AG04449 (cell line): ENCODE measurements at regions of chr5 and their contacts with region 1.

Region 1: GRCh38 chr5:72307968-72308852 is 11.8 kb downstream of the MRPS27 start:
- DNase-seq: peak; percentile 81
- H3K4me3 ChIP-seq: peak overlapping the region; percentile 80
- CTCF ChIP-seq: peak; percentile 94

Region 2: DNA sequence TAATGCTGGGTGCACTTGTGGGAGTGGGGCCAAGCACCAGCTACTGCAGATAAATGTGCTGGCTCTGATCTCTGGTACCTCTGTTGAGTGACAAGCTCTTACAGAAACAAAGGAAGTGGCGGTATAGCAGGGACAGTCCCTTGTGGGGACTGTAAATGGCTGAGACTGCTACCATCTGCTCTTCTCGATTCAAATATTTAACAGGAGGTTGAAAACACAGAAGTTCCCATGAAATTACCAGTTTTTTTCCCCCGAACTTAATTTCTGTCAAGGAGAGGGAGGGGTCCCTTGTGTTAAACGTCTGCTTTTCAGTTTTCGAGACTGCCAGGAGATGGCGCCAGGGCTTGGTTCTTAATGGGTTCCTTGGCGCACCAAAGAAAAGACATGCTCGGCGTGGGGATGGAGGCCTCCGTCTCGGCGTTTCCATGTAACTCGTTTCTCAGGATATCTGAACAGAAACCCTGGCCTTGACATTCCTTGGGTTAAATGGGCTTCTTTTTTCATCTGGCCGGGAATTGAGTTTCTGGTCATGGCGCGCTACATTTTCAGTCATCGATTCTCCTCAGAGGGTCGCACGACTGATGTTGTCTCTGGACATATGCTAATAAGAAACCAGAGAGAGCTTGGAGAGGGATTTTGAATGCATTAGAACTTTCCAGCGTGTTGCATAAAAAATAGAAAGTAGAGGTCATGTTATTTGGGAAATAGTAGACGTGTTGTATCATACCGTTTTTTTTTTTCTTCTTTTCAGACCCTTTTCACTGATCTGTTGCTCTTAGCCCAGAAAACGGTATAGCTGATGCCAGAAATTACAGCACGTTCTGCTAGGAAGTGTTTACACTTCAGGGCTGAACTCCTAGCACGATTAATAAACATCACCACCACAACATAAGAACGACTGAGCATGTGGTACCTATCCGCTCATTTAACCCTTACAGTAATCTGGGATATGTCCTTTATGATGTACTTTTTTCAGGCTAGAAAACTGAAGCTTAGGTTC is 525.1 kb before region 1 on chr5:
- CTCF ChIA-PET with region 1: interaction called, 25 read pairs
- POLR2A ChIA-PET with region 1: no interaction called
- DNase-seq: no peak
- H3K4me3 ChIP-seq: no peak overlapping the region
- CTCF ChIP-seq: peak; percentile 79

Region 3: DNA sequence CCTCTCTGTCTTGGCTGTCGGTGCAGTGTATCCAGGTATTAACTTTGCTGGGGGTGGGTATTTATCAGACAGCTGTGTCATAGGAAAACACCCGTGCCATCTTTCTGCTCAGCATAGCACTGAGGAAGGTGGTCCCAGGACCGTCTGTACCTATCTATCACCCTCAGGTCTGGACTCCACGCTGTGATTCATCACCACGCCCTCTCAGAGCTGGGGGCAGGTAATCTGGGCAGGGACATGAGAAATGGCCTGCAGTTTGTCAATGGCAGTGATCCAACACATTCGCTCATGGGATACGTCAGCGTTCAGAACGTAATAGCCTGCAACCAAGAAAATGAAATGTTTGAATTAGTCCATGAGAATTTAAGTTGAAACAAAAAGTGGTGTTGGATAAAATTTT is 352.5 kb before region 1 on chr5:
- CTCF ChIA-PET with region 1: no interaction called
- POLR2A ChIA-PET with region 1: no interaction called
- DNase-seq: no peak
- H3K4me3 ChIP-seq: no peak overlapping the region
- CTCF ChIP-seq: no peak

Region 4: DNA sequence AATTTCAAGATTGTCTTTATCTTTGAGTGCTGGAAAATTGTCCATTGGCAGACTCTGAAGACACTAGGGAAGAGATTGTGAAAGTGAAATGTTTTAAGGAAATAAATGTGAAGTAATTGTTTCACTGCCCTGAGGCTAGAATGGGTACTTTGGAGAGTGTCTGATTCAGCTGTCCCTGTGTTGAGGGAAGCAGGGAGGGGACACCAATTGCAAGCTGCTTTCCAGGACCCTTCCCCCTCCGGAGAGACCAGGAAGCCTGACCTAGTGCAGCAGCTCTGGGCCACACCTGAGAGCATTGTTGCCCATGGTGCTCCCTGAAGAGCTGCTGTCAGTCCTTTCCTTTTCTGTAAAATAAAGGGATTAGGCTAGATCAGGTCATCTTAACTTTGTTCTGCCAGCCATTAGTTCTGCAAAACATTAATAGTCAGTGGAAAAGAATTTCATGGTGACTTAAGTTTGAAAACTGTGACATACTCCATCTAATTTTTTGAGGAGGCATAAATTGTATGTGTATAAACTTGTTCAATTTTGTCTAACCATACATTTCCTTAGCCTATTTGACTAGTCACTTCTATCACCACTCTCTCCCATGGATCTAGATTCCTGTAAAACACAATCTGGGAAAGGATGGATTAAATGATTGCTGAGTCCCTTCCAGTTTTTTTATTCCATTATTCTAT is 182.1 kb before region 1 on chr5:
- CTCF ChIA-PET with region 1: interaction called, 14 read pairs
- POLR2A ChIA-PET with region 1: no interaction called
- DNase-seq: no peak
- H3K4me3 ChIP-seq: no peak overlapping the region
- CTCF ChIP-seq: no peak

Region 5: DNA sequence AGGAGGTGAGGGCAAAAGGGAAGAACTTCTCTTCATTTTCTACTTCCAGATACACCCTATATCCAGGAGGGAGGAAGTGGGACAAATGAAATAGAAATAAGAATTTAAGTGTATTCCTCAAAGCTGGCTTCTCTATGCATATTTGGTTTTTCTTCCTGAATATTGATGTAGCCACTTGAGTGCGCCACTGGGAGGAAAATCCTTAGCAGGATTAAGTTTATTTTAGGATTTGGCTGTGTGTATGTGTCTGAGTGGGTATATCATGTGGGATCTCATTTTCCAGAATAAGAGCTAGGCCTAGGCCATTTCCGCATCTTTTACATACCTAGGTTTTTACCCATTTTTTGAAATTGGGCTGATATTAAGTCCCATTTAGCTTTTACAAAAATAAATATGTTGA is 158.5 kb before region 1 on chr5:
- CTCF ChIA-PET with region 1: interaction called, 14 read pairs
- POLR2A ChIA-PET with region 1: no interaction called
- DNase-seq: no peak
- H3K4me3 ChIP-seq: no peak overlapping the region
- CTCF ChIP-seq: peak; percentile 17

Region 6: GRCh38 chr5:72319976-72320752 is 12.0 kb after region 1 on chr5 and contains the starts of genes MRPS27 and PTCD2:
- CTCF ChIA-PET with region 1: interaction called, 17 read pairs
- POLR2A ChIA-PET with region 1: interaction called, 13 read pairs
- DNase-seq: peak; percentile 97
- H3K4me3 ChIP-seq: peak within 1 kb of the TSS; percentile 98
- CTCF ChIP-seq: peak; percentile 38

Region 7: GRCh38 chr5:72465601-72466563 is 157.7 kb after region 1 on chr5:
- CTCF ChIA-PET with region 1: no interaction called
- POLR2A ChIA-PET with region 1: no interaction called
- DNase-seq: no peak
- H3K4me3 ChIP-seq: no peak overlapping the region
- CTCF ChIP-seq: no peak